ENCODE measurements at regions of chr12 and their contacts with region 1.

Region 1: DNA sequence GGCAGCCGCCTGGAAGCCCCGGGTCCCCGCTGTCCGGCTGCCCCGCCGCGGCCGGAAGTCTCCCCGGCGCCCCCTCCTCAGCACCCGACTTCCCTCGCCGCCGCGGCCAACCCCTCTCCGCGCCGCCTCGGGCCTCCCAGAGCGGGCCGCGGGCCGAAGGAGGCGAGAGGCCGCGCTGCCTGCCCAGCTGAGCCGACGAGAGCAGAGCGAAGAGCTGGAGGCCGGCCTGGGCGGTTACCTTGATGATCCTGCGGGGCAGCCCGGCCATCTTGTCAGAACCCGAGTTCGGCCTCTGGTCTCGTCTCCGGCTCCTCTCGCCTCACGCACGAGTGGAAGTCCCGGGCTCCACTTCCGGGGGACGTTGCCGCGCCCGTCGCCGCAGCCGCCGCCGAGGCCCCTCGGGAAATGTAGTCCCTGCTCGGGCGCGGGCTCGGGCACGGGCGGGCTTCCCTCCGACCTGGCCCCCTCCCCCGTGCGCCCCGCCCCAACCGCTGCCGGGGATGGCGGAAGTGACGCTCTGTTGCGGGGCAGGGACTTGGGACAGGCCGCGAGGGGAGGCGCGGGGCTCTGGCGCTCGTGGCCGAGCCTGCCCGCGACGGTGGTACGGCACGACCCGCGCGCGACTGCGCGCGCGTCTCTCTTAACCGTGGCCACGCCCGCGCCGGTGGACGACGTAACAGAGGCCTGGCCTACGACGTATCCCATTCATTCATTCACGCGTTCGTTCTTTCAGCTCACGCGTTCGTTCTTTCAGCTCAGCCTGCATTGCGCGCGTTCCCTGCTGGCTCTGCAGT is at the start of gene UBE2N:
- DNase-seq: peak; percentile 97
- ATAC-seq: peak; percentile 85
- H3K4me3 ChIP-seq: peak within 1 kb of the TSS; percentile 65 to 92 (median 84)
- H3K4me3 Mint-ChIP-seq: peak within 1 kb of the TSS; percentile 94
- H3K27ac ChIP-seq: peak within 1 kb of the TSS; percentile 88 to 97
- H3K27ac Mint-ChIP-seq: peak within 1 kb of the TSS; percentile 96
- H3K4me1 ChIP-seq: peaks cover 41 to 46% of the 10 kb centered on the region in 2 donors
- H3K4me1 Mint-ChIP-seq: peaks cover 48% of the 10 kb centered on the region
- H3K27me3 ChIP-seq: no peaks in the 10 kb centered on the region
- H3K27me3 Mint-ChIP-seq: no peaks in the 10 kb centered on the region
- CTCF ChIP-seq: no peak
- total RNA-seq, gene UBE2N: 81.7 and 83.8 TPM in 2 replicates

Region 2: DNA sequence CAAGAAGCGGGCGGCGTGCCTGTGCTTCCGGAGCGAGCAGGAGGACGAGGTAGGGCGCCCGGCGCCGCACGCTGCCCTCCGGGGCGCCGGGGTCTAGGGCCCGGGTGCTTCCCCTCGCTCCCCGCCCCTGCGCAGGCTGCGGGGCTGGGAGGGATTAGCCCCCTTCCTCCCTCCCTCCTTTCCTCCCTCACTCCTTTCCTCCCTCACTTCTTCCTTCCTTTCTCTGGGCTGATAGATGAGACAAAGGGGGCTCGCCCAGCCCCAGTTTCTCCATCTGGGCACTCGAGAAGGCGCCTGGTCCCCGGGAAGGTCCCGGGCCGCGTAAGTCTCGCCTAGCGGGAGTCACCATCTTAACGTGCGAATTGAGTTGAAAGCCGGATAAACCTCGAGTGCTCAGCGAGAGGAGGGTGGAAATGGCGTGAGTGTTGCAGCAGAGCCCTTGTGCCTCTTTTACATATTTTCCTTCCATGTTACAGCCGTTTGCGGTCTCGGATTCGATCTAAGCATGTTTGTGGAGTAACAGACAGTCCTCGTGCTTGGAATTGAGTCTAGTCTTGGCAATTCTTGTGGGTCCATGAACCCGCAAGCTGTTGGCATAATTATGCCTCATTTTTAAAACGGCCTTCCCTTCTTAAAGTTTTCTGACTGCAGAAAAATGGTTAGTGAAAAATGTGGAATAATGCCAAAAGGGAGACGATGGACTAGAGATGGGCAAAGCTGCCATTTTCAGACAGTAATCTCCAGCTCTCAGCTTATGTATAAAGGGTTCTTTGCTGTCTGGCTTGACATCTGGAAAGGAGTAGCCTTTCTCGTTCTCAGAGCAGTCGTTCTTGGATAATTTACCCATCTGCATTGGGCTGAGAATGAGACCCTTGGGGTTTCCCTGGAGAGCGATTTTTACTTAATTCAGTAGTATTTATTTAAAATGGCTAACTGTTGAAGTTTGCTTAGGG is 63.2 kb before region 1 on chr12:
- CTCF ChIA-PET with region 1: interaction called, 3 read pairs
- POLR2A ChIA-PET with region 1: interaction called, 3 read pairs
- intact Hi-C with region 1: loop called (anchors 1 kb)
- DNase-seq: peak; percentile 76
- ATAC-seq: peak; percentile 44
- H3K4me3 ChIP-seq: peak overlapping the region; percentile 73 to 96 (median 86)
- H3K4me3 Mint-ChIP-seq: peak overlapping the region; percentile 98
- H3K27ac ChIP-seq: peak overlapping the region; percentile 75 to 89
- H3K27ac Mint-ChIP-seq: peak overlapping the region; percentile 98
- H3K4me1 ChIP-seq: peaks cover 20 to 29% of the 10 kb centered on the region in 2 donors
- H3K4me1 Mint-ChIP-seq: peaks cover 40% of the 10 kb centered on the region
- H3K27me3 ChIP-seq: no peaks in the 10 kb centered on the region
- H3K27me3 Mint-ChIP-seq: no peaks in the 10 kb centered on the region
- CTCF ChIP-seq: no peak

Region 3: DNA sequence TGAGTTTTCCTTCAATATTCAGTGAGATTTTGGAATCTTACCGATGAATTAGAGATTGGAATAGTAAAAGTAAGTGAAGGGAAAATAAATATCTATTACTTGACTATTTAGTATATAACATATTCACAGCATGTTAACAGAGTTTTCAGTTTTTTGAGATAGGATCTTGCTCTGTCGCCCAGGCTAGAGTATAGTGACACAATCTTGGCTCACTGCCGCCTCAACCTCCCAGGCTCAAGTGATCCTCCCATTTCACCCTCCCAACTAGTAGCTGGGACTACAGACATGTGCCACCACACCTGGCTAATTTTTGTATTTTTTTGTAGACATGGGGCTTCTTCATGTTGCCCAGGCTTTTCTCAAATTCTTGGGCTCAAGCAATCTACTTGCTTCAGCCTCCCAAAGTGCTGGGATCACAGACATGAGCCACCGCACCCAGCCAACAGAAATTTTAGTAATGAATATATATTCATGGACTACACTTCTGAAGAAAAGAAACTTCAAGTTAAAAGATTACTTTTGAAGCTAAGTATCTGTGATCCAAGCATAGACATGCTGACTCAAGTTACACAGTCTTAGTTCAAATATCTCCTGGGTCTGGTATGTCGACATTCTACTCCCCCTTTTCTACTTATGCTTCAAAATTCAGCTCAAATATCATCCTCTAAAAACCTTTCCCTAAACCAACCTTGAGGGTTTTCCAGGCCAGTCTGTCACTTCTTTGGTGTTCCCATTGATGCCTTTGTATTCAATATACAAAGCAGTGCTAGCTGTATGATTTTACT is 13.8 kb before region 1 on chr12:
- CTCF ChIA-PET with region 1: interaction called, 19 read pairs
- POLR2A ChIA-PET with region 1: interaction called, 7 read pairs
- intact Hi-C with region 1: loop called (anchors 2 kb)
- DNase-seq: no peak
- ATAC-seq: no peak
- H3K4me3 ChIP-seq: no peak overlapping the region
- H3K4me3 Mint-ChIP-seq: no peak overlapping the region
- H3K27ac ChIP-seq: peak overlapping the region; percentile 67 to 80
- H3K27ac Mint-ChIP-seq: peak overlapping the region; percentile 77
- H3K4me1 ChIP-seq: peaks cover 75 to 77% of the 10 kb centered on the region in 2 donors
- H3K4me1 Mint-ChIP-seq: peaks cover 80% of the 10 kb centered on the region
- H3K27me3 ChIP-seq: no peaks in the 10 kb centered on the region
- H3K27me3 Mint-ChIP-seq: no peaks in the 10 kb centered on the region
- CTCF ChIP-seq: no peak

Region 4: DNA sequence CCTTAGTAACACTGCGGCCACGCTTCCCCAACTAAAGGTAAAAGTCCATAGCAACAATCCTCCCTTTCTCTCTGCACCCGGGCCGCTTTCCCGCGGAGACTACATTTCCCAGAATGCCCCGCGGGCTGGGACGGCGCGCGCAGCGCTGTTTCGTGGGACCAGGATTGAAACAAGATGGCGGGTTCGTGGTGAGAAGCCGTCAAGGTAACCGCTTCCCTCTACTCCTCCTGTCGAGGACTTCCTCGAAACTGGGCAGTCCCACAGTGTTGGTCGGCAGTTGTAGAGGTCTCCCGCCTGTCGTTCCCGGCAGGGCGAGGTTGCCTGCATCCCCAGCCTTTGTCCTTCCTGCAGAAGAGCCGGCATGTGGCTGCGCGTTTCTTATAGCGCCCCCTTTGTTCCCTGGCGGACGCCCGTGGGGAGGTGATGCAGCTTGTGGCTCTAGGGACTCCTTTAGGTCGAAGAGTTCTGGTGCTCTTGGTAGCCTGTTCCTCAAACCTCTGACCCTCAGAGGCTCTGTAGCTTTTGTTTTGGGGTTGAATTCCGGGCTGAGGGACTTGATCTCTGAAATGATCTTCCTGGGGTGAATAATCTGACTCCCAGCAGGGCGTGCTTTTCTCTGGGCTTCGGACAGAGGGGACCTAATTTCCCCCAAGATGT is 25.7 kb after region 1 on chr12 and contains the start of gene MRPL42:
- CTCF ChIA-PET with region 1: interaction called, 8 read pairs
- POLR2A ChIA-PET with region 1: interaction called, 6 read pairs
- intact Hi-C with region 1: loop called (anchors 1 kb)
- DNase-seq: peak; percentile 95
- ATAC-seq: peak; percentile 93
- H3K4me3 ChIP-seq: peak within 1 kb of the TSS; percentile 64 to 82 (median 78)
- H3K4me3 Mint-ChIP-seq: peak within 1 kb of the TSS; percentile 95
- H3K27ac ChIP-seq: peak within 1 kb of the TSS; percentile 60 to 80
- H3K27ac Mint-ChIP-seq: peak within 1 kb of the TSS; percentile 95
- H3K4me1 ChIP-seq: peaks cover 12 to 17% of the 10 kb centered on the region in 2 donors
- H3K4me1 Mint-ChIP-seq: peaks cover 28% of the 10 kb centered on the region
- H3K27me3 ChIP-seq: no peaks in the 10 kb centered on the region
- H3K27me3 Mint-ChIP-seq: no peaks in the 10 kb centered on the region
- CTCF ChIP-seq: peak; percentile 83
- total RNA-seq, gene MRPL42: 41.9 and 45.2 TPM in 2 replicates

Region 5: DNA sequence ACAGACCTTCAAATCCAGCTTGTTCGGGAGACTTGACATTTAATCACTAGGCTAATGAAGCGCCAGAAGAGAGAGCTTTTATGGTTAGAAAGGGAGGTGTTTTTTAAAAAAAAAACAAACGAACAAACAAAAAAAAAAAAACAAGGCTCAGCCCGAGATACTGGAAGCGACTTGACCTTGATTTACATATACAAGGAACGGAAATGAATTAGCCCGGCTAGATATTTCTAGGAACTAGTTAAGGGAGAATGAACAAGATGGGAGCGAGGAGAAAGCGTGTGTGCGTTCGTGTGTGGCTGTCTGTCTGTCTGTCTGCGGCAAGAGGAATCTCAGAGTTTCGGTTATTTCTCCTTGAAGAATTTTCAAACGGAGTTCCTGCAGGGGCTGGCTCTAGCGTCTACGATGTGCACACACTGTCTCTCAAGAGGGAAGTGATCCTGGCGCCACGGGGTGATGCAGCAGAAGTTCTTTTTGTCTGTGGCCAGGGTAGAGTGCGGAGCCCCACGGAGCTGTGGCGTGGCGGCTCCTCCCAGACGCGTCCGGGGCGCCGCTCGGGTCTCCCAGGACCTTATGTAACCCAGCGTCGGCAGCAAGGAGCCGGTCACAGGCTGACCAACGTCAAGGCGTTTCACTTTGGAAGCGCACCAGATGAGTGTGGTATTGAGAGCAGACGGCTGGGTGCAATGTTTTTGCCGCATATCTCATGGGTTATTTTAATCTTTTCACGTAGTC is 149.5 kb after region 1 on chr12:
- CTCF ChIA-PET with region 1: no interaction called
- POLR2A ChIA-PET with region 1: no interaction called
- intact Hi-C with region 1: no loop called
- DNase-seq: peak; percentile 78
- ATAC-seq: peak; percentile 94
- H3K4me3 ChIP-seq: peak overlapping the region; percentile 29 to 74 (median 46)
- H3K4me3 Mint-ChIP-seq: peak overlapping the region; percentile 91
- H3K27ac ChIP-seq: no peak overlapping the region
- H3K27ac Mint-ChIP-seq: no peak overlapping the region
- H3K4me1 ChIP-seq: peaks cover 14 to 17% of the 10 kb centered on the region in 2 donors
- H3K4me1 Mint-ChIP-seq: peaks cover 14% of the 10 kb centered on the region
- H3K27me3 ChIP-seq: peaks cover 0 to 58% (median 44%) of the 10 kb centered on the region in 4 experiments
- H3K27me3 Mint-ChIP-seq: peaks cover 59% of the 10 kb centered on the region
- CTCF ChIP-seq: no peak

Measured in B cell (primary cell).